Activated naive CD4-positive, alpha-beta T cell treated with anti-CD3 and anti-CD28 coated beads for 36 hours (primary cell): ENCODE measurements at regions of chr22 and their contacts with region 1.

Region 1: DNA sequence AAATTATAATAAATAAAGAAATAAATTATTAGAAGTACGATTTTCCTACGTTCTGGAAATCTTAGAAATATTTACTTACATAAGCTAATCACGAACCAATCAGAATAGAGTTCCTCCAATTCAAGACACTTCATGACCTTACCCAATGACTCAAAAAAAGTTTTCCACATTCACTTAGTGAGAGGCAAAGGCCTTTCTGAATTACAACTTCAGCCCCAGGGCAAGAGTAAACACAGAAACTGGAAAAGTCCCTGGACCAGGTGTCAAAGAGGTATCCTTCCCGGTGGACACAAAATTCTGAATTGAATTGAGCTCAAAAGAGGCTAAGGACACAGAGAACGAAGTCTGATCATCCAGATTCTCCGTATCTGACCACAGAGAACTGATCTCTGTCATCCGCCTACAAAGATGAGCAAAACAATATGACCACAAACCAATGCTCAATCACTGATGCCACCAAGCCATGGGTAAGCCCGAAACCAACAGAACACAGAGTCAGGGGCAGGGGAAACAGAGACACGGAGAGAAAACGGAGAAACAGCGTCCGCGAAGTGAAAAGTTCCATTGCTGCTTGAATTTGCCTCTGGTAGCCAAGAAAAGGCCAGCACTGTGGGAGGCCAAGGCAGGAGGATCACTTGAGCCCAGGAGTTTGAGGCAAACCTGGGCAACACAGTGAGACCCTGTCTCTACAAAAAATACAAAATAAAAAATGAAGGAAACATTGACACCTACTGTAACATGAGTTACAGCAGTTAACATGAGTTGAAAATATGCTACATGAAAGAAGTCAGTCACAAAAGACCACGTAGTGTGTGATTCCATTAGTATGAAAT is 6.8 kb downstream of the BID start:
- DNase-seq: peak; percentile 73
- H3K4me3 Mint-ChIP-seq: peak overlapping the region; percentile 11
- H3K27ac Mint-ChIP-seq: no peak overlapping the region
- H3K4me1 Mint-ChIP-seq: peaks cover 58% of the 10 kb centered on the region
- H3K27me3 Mint-ChIP-seq: no peaks in the 10 kb centered on the region

Region 2: DNA sequence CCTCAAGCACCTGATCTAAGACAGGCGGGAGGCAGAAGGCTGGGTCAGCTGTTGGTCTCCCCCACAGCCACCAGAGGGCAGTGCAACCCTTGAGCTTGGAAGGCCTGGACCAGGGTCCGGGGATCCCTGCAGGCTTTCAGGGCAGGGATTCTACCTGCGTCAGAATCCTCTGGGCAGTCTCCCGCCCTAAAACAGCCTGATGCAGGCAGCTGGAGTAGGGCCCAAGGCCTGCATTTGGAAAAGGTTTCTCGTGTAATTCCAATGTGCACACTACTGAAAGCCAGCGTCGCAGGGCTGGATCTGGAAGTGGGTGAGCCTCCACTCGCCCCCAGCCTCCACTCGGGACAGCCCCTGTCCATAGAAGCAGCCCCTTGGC is 24.9 kb before region 1 on chr22:
- CTCF ChIA-PET with region 1: interaction called, 14 read pairs
- intact Hi-C with region 1: no loop called
- DNase-seq: peak; percentile 79
- H3K4me3 Mint-ChIP-seq: no peak overlapping the region
- H3K27ac Mint-ChIP-seq: no peak overlapping the region
- H3K4me1 Mint-ChIP-seq: peaks cover 4% of the 10 kb centered on the region
- H3K27me3 Mint-ChIP-seq: no peaks in the 10 kb centered on the region

Region 3: DNA sequence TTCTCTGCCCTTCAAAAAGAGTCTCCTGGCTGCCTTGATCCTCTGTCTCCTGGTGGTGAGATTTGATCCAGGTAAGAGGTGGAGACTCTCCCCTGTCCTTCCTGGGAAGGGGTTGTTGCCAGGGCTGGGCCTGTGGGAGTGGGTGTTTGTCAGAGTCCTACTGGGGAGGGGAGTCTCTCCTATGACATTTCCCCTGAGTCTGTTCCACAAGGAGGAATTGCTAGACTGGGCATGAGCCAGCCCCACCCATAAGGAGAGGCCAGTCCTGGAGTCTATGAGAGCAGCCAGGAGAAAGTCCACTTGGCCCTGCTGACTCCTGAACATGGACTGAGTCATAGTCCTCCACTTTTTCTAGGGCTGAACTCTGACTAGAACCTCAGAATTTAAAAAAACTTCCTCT is 317.7 kb after region 1 on chr22:
- CTCF ChIA-PET with region 1: no interaction called
- intact Hi-C with region 1: no loop called
- DNase-seq: no peak
- H3K4me3 Mint-ChIP-seq: no peak overlapping the region
- H3K27ac Mint-ChIP-seq: no peak overlapping the region
- H3K4me1 Mint-ChIP-seq: peaks cover 25% of the 10 kb centered on the region
- H3K27me3 Mint-ChIP-seq: no peaks in the 10 kb centered on the region